Activated CD4-positive, alpha-beta memory T cell treated with anti-CD3 and anti-CD28 coated beads, Interleukin-2, amount 10 ng/mL, durations not matched to agents 7 days and 5 days (primary cell): ENCODE measurements at regions of chr17 and their contacts with region 1.

Region 1: DNA sequence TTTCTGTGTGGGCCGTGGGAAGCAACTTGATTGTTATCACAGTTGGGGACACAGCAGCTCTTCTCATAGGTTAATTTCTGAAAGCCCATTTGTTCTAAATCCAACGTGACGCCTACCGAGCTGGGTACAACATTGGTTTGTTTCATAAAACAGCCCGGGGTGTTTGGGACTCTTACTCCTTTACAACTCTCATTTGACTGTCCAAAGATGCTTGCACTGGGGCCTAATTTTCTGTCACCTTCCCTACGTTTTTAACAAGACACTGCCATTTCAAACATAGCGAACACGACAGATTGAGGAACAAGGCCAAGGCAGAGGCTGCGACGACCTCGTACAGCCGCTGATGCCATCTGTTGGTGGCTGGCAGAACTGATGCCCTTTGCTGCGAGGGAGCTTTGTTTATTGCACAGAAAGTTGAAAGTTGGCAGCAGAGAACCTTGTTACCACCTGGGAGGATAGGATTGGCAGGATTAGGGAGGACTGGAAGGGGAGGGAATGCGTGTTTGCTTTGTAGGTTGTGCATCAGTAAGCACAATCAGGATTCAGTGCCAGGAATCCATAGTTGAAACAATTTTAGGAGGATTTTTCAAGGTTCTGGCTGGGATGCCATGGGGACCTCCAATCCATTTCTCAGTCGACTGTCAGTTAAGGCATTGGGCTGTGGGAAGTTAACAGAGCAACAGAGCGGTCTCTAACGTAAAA is 98.3 kb downstream of the PITPNC1 start:
- DNase-seq: peak; percentile 88
- H3K4me3 Mint-ChIP-seq: peak overlapping the region; percentile 46
- H3K27ac Mint-ChIP-seq: peak overlapping the region; percentile 82
- H3K4me1 Mint-ChIP-seq: peaks cover 45% of the 10 kb centered on the region
- H3K27me3 Mint-ChIP-seq: peaks cover 2% of the 10 kb centered on the region

Region 2: GRCh38 chr17:67336859-67337258 is 138.5 kb before region 1 on chr17:
- CTCF ChIA-PET with region 1: no interaction called
- POLR2A ChIA-PET with region 1: no interaction called
- DNase-seq: no peak
- H3K4me3 Mint-ChIP-seq: no peak overlapping the region
- H3K27ac Mint-ChIP-seq: no peak overlapping the region
- H3K4me1 Mint-ChIP-seq: no peaks in the 10 kb centered on the region
- H3K27me3 Mint-ChIP-seq: no peaks in the 10 kb centered on the region

Region 3: GRCh38 chr17:67366193-67367157 is 108.9 kb before region 1 on chr17 and contains the start of gene PSMD12:
- CTCF ChIA-PET with region 1: interaction called, 13 read pairs
- POLR2A ChIA-PET with region 1: interaction called, 7 read pairs
- DNase-seq: peak; percentile 94
- H3K4me3 Mint-ChIP-seq: peak within 1 kb of the TSS; percentile 99
- H3K27ac Mint-ChIP-seq: peak within 1 kb of the TSS; percentile 96
- H3K4me1 Mint-ChIP-seq: peaks cover 49% of the 10 kb centered on the region
- H3K27me3 Mint-ChIP-seq: peaks cover 2% of the 10 kb centered on the region
- total RNA-seq, gene PSMD12: 49.3 to 50.0 TPM

Region 4: DNA sequence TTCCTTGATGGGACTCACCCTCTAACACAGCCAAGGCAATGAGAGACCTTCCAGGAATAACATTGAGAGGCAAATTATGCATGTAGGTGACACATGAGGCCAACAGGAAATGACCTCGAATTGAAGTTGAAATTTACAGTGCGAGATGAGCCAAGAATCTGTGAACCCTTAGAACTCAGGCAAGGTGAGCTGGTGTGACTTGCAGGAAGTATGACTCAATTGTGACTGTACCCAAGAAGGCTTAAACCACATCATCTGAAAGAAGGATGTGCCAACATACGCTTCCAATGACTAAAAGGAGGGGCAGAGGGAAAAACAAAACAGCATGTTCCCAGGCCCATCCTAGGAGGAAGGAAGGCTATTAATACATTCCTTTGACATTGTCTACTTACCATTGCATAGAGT is 53.5 kb before region 1 on chr17:
- CTCF ChIA-PET with region 1: interaction called, 13 read pairs
- POLR2A ChIA-PET with region 1: interaction called, 10 read pairs
- DNase-seq: peak; percentile 64
- H3K4me3 Mint-ChIP-seq: no peak overlapping the region
- H3K27ac Mint-ChIP-seq: peak overlapping the region; percentile 83
- H3K4me1 Mint-ChIP-seq: peaks cover 51% of the 10 kb centered on the region
- H3K27me3 Mint-ChIP-seq: no peaks in the 10 kb centered on the region

Region 5: GRCh38 chr17:67441052-67441927 is 34.1 kb before region 1 on chr17:
- CTCF ChIA-PET with region 1: interaction called, 36 read pairs
- POLR2A ChIA-PET with region 1: interaction called, 71 read pairs
- DNase-seq: peak; percentile 79
- H3K4me3 Mint-ChIP-seq: peak overlapping the region; percentile 74
- H3K27ac Mint-ChIP-seq: peak overlapping the region; percentile 99
- H3K4me1 Mint-ChIP-seq: peaks cover 42% of the 10 kb centered on the region
- H3K27me3 Mint-ChIP-seq: no peaks in the 10 kb centered on the region

Region 6: DNA sequence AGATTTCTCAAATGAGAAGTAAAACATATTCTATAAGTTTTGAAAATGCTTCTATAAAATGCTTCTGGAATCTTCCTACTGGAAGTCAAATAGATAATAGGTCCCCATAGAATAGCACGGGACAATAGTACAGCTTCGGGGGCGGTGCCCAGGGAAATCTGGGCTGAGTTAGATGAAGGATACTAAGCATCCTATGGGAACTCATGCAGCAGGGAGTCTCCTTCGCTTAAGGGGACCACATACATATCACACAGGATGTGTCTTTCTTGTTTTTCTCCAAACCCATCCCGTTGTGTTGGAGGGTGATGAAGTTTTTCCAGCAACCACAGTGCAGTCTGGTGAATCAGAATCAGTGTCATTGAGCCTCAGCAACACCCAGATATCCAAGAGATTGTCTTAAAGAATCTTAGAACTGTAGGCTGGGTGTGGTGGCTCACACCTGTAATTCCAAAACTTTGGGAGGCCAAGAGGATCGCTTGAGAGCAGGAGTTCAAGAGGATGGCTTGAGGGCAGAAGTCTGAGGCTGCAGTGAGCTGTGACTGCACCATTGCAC is 14.1 kb before region 1 on chr17:
- CTCF ChIA-PET with region 1: interaction called, 13 read pairs
- POLR2A ChIA-PET with region 1: interaction called, 8 read pairs
- DNase-seq: no peak
- H3K4me3 Mint-ChIP-seq: no peak overlapping the region
- H3K27ac Mint-ChIP-seq: no peak overlapping the region
- H3K4me1 Mint-ChIP-seq: peaks cover 27% of the 10 kb centered on the region
- H3K27me3 Mint-ChIP-seq: no peaks in the 10 kb centered on the region

Region 7: GRCh38 chr17:67503184-67503583 is 27.8 kb after region 1 on chr17:
- CTCF ChIA-PET with region 1: no interaction called
- POLR2A ChIA-PET with region 1: no interaction called
- DNase-seq: no peak
- H3K4me3 Mint-ChIP-seq: no peak overlapping the region
- H3K27ac Mint-ChIP-seq: no peak overlapping the region
- H3K4me1 Mint-ChIP-seq: peaks cover 12% of the 10 kb centered on the region
- H3K27me3 Mint-ChIP-seq: no peaks in the 10 kb centered on the region

Region 8: DNA sequence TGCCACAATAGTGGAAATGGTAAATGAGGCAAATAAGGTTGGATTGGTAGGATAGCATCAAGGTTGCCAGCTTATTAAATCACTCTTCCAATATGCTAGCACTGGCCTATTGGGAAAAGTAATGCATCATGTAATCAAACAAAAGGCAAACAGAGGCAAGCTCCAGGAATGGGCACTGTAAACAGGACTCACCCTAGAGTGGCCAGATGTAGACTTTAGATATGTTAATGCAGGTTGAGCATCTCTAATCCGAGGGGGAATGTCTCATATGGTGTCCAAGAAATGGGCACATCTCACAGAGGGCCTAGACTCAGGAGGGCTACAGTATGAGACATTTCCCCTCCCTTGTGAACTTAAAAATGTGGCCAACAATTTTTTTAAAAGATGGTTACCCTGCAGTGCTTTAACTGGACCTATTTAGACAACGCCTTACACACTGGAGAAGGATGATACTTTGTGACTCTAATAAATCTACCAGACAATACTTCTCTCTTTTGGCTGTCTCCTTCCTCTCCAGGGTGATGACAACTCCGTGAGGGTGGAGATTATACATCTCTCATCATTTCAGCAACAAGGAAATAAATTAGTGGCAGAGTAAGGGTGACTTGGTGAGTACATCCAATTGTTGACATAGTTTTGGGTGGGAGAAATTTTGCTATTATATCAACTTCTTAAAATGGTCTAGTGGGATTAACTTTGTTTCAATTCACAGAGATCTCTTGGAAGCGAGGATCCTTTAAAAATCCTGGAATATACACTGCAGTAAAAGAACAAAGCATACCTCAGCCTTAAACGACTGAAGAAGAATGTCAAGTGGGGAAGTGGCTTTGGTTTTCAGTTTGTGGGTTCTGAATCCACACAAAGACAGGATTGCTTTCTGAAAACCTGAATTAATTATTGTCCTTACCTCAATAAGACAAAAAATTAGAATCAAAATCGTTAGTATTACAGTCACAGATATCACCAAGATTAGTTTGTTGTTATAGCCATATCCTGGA is 649.8 kb after region 1 on chr17:
- CTCF ChIA-PET with region 1: no interaction called
- POLR2A ChIA-PET with region 1: no interaction called
- DNase-seq: no peak
- H3K4me3 Mint-ChIP-seq: no peak overlapping the region
- H3K27ac Mint-ChIP-seq: no peak overlapping the region
- H3K4me1 Mint-ChIP-seq: peaks cover 9% of the 10 kb centered on the region
- H3K27me3 Mint-ChIP-seq: no peaks in the 10 kb centered on the region